CD4-positive, alpha-beta memory T cell (primary cell): ENCODE measurements at regions of chr15 and their contacts with region 1.

Region 1: GRCh38 chr15:72011302-72011942 is 106.5 kb downstream of the MYO9A start:
- DNase-seq: no peak
- H3K4me3 ChIP-seq: no peak overlapping the region
- H3K4me3 Mint-ChIP-seq: no peak overlapping the region
- H3K27ac ChIP-seq: no peak overlapping the region
- H3K27ac Mint-ChIP-seq: peak overlapping the region in 1 of 7 donors; percentile 7
- H3K4me1 ChIP-seq: no peaks in the 10 kb centered on the region
- H3K4me1 Mint-ChIP-seq: no peaks in the 10 kb centered on the region
- H3K27me3 ChIP-seq: no peaks in the 10 kb centered on the region
- H3K27me3 Mint-ChIP-seq: no peaks in the 10 kb centered on the region

Region 2: GRCh38 chr15:72057548-72058091 is 46.2 kb after region 1 on chr15:
- CTCF ChIA-PET with region 1: no interaction called
- POLR2A ChIA-PET with region 1: no interaction called
- intact Hi-C with region 1: no loop called
- DNase-seq: no peak
- H3K4me3 ChIP-seq: no peak overlapping the region
- H3K4me3 Mint-ChIP-seq: peak overlapping the region in 1 of 8 donors; percentile 27
- H3K27ac ChIP-seq: no peak overlapping the region
- H3K27ac Mint-ChIP-seq: peak overlapping the region in 2 of 7 donors; percentile 2 to 32
- H3K4me1 ChIP-seq: peaks cover 12% of the 10 kb centered on the region
- H3K4me1 Mint-ChIP-seq: peaks cover 14 to 16% (median 15%) of the 10 kb centered on the region in 4 donors
- H3K27me3 ChIP-seq: no peaks in the 10 kb centered on the region
- H3K27me3 Mint-ChIP-seq: no peaks in the 10 kb centered on the region

Region 3: DNA sequence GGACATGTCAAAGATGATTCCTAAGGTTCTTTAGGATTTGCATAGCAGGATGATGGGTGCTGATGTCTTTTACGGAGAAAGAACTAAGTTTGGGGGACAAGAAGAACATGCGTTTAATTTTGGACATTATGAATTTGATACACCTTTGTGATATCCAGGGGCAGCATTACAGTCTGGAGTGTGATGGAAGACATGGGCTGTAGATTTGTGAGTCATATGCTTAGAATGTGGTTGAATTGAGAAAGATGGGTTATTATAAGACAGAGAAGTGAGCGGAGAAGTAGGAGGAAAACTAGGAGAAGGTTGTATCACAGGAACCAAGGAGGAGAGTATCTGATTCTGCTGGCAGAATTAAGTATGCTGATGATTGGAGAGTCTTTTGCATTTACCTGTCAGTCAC is 1061.5 kb after region 1 on chr15:
- CTCF ChIA-PET with region 1: no interaction called
- POLR2A ChIA-PET with region 1: no interaction called
- intact Hi-C with region 1: loop called (anchors 5 kb)
- DNase-seq: no peak
- H3K4me3 ChIP-seq: no peak overlapping the region
- H3K4me3 Mint-ChIP-seq: no peak overlapping the region
- H3K27ac ChIP-seq: no peak overlapping the region
- H3K27ac Mint-ChIP-seq: no peak overlapping the region
- H3K4me1 ChIP-seq: no peaks in the 10 kb centered on the region
- H3K4me1 Mint-ChIP-seq: no peaks in the 10 kb centered on the region
- H3K27me3 ChIP-seq: no peaks in the 10 kb centered on the region
- H3K27me3 Mint-ChIP-seq: no peaks in the 10 kb centered on the region